Activated CD4-positive, alpha-beta memory T cell treated with anti-CD3 and anti-CD28 coated beads for 36 hours (primary cell): ENCODE measurements at regions of chr12 and their contacts with region 1.

Region 1: DNA sequence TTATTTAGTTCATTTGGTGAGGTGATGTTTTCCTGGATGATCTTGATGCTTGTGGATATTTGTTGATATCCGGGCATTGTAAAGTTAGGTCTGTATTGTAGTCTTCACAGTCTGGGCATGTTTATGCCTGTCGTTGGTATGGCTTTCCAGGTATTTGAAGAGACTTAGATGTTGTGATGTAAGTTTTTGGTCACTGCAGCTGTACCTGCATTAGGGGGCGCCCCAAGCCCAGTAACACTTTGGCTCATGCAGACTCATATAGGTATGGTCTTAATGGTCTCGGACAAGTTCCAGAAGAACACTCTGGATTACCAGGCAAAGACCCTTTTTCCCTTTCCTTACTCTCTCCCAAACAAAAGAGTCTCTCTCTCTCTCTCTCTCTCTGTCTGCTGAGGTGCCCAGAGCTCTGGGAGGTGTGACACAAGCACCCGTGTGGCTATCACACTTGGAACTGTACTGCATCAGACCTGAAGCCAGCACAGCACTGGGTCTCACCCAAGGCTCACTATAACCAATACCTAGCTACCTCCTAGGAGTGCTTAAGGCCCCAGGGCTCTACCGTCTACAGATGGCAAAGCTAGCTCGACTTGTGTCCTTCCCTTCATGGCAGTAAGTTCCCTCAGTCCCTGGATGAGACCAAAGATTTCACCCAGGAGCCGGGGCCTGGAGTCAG is 425.8 kb upstream of the ATXN7L3B start:
- DNase-seq: peak; percentile 14
- H3K4me3 Mint-ChIP-seq: no peak overlapping the region
- H3K27ac Mint-ChIP-seq: no peak overlapping the region
- H3K4me1 Mint-ChIP-seq: no peaks in the 10 kb centered on the region
- H3K27me3 Mint-ChIP-seq: no peaks in the 10 kb centered on the region

Region 2: GRCh38 chr12:74415633-74416032 is 303.8 kb after region 1 on chr12:
- CTCF ChIA-PET with region 1: no interaction called
- POLR2A ChIA-PET with region 1: no interaction called
- intact Hi-C with region 1: loop called (anchors 1 kb)
- DNase-seq: no peak
- H3K4me3 Mint-ChIP-seq: no peak overlapping the region
- H3K27ac Mint-ChIP-seq: no peak overlapping the region
- H3K4me1 Mint-ChIP-seq: no peaks in the 10 kb centered on the region
- H3K27me3 Mint-ChIP-seq: peaks cover 10% of the 10 kb centered on the region